A549 (cell line): ENCODE measurements at regions of chrX and their contacts with region 1.

Region 1: DNA sequence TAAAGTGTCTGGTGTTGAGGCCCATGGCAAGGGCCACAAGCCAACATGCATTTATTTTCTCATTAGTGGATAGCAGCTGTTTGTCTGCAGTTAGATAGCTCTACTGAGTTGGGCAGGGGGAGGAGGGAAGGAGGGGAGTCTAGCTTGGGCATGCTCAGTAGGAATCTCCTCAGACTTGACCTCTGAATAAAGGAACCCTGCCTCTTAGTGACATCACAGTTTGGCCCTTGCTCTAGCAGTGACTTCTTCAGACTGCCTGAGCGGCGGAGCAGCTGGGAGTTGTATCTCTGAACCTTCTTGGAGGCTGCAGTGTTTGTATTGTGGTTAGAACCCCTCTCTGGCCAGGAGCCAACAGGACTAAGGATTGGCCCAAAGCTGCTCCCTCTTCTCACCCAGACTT is 57.4 kb downstream of the BCORL1 start:
- DNase-seq: no peak
- ATAC-seq: no peak
- H3K4me3 ChIP-seq: no peak overlapping the region
- H3K27ac ChIP-seq: no peak overlapping the region
- H3K4me1 ChIP-seq: no peaks in the 10 kb centered on the region
- CTCF ChIP-seq: no peak
- EP300 ChIP-seq: no peak
- POLR2A ChIP-seq: no peak
- RAD21 ChIP-seq: no peak

Region 2: GRCh38 chrX:130024127-130024526 is 15.7 kb before region 1 on chrX:
- CTCF ChIA-PET with region 1: interaction called, 10 read pairs
- POLR2A ChIA-PET with region 1: no interaction called
- DNase-seq: peak; percentile 40 to 56
- ATAC-seq: peak; percentile 43 to 89; a peak in 5 of 6 replicates
- H3K4me3 ChIP-seq: no peak overlapping the region
- H3K27ac ChIP-seq: no peak overlapping the region
- H3K4me1 ChIP-seq: no peaks in the 10 kb centered on the region
- CTCF ChIP-seq: no peak
- EP300 ChIP-seq: no peak
- POLR2A ChIP-seq: no peak
- RAD21 ChIP-seq: no peak

Region 3: DNA sequence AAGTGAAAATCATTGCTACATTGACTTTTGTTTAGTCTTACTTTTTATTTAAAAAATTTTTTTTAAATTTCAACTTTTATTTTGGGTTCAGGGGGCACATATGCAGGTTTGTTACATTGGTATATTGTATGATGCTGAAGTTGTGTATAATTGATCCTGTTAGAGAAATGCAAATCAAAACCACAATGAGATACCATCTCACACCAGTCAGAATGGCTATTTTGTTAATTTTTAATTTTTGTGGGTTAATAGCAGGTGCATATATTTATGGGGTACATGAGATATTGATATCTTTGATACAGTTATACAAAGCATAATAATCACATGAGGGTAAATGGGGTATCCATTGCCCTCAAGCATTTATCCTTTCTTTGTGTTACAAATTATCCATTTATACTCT is 396.1 kb after region 1 on chrX:
- CTCF ChIA-PET with region 1: no interaction called
- POLR2A ChIA-PET with region 1: no interaction called
- DNase-seq: no peak
- ATAC-seq: no peak
- H3K4me3 ChIP-seq: no peak overlapping the region
- H3K27ac ChIP-seq: no peak overlapping the region
- H3K4me1 ChIP-seq: no peaks in the 10 kb centered on the region
- CTCF ChIP-seq: no peak
- EP300 ChIP-seq: no peak
- POLR2A ChIP-seq: no peak
- RAD21 ChIP-seq: no peak